Motor neuron (in vitro differentiated cells): ENCODE measurements at regions of chr15 and their contacts with region 1.

Region 1: DNA sequence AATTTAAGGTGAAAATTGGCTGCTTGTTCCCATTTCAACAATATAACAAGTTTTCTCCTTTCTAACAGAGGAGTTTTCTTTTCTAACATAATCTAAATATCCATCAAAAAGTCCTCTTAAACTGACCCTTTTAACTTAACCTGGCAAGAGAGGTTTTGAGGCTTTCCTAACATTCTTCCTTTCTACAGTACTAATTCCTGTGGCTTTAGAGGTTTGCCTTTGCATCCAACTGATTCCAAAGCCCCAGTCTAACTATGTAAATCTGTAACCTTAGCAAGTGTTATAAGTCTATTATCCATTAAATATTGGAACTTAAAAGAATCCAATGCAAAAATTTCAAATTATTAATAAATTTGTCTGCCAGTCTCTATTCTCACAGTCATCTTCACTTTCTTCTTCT is 134.1 kb downstream of the ISL2 start:
- ATAC-seq: no peak
- H3K4me3 ChIP-seq: no peak overlapping the region
- H3K27ac ChIP-seq: no peak overlapping the region
- H3K4me1 ChIP-seq: no peaks in the 10 kb centered on the region

Region 2: DNA sequence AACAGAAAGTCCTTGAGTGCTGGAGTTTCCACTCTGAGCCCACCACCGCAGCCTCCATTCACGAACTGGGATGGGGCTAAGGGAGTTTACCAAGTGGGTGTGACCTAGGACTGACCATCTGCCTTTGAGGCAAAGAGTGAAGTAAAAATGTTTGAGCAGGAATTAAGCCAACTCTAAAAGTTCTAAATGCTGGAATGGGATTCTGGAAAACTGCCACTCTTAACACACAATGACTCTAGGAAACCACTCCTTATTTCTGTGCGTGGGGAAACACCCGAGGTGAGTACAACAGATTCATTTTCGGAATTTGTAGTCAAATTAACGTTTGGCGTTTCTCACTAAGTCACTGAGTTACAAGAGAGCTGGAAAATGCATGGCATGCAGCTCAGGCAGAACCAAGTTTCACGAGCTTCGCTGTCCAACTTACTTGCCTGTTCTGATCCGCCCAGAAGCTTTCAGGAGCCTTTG is 102.5 kb before region 1 on chr15:
- in situ Hi-C with region 1: loop called in 1 of 9 experiments (anchors 25 kb)
- ATAC-seq: peak in 4 of 8 experiments; percentile 46 to 95 (median 82)
- H3K4me3 ChIP-seq: no peak overlapping the region
- H3K27ac ChIP-seq: no peak overlapping the region
- H3K4me1 ChIP-seq: peaks cover 2 to 5% of the 10 kb centered on the region in 2 donors

Region 3: GRCh38 chr15:76566276-76566675 is 95.6 kb after region 1 on chr15:
- in situ Hi-C with region 1: loop called in 1 of 9 experiments (anchors 25 kb)
- ATAC-seq: no peak
- H3K4me3 ChIP-seq: no peak overlapping the region
- H3K27ac ChIP-seq: no peak overlapping the region
- H3K4me1 ChIP-seq: no peaks in the 10 kb centered on the region

Region 4: GRCh38 chr15:76776480-76776879 is 305.8 kb after region 1 on chr15:
- in situ Hi-C with region 1: no loop called
- ATAC-seq: no peak
- H3K4me3 ChIP-seq: no peak overlapping the region
- H3K27ac ChIP-seq: no peak overlapping the region
- H3K4me1 ChIP-seq: no peaks in the 10 kb centered on the region